Upper lobe of right lung (tissue), 1 donor: ENCODE measurements at regions of chr4 and their contacts with region 1.

Region 1: GRCh38 chr4:87006676-87007527 is 72.1 kb downstream of the AFF1 start:
- DNase-seq: peak; percentile 97
- ATAC-seq: peak; percentile 95
- H3K4me3 ChIP-seq: peak overlapping the region; percentile 83
- H3K27ac ChIP-seq: peak overlapping the region; percentile 98
- H3K4me1 ChIP-seq: peaks cover 44% of the 10 kb centered on the region
- H3K27me3 ChIP-seq: no peaks in the 10 kb centered on the region
- CTCF ChIP-seq: peak; percentile 17

Region 2: DNA sequence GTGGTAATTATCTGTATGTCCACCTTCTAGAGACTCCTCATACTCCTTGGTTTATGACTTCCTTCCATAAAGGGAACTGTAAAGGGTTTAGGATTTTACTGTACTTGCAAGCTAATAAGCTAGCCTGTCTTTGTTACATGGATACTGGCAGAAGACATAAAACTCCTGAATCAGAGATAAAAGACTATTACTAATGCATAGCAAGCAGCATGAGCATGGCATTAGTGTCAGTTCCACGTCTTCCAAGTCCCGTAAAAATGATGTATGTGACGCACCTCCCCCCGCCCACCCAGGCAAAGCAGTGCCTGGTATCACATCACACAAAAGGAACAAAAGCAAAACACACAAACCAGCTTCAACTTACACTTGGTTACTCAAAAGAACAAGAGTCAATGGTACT is 228.7 kb before region 1 on chr4:
- intact Hi-C with region 1: no loop called
- DNase-seq: no peak
- ATAC-seq: no peak
- H3K4me3 ChIP-seq: no peak overlapping the region
- H3K27ac ChIP-seq: no peak overlapping the region
- H3K4me1 ChIP-seq: no peaks in the 10 kb centered on the region
- H3K27me3 ChIP-seq: no peaks in the 10 kb centered on the region
- CTCF ChIP-seq: no peak

Region 3: GRCh38 chr4:86934771-86935565 is 71.9 kb before region 1 on chr4 and contains the start of gene AFF1:
- intact Hi-C with region 1: loop called (anchors 10 kb)
- DNase-seq: peak; percentile 98
- ATAC-seq: peak; percentile 97
- H3K4me3 ChIP-seq: peak within 1 kb of the TSS; percentile 91
- H3K27ac ChIP-seq: peak within 1 kb of the TSS; percentile 97
- H3K4me1 ChIP-seq: peaks cover 33% of the 10 kb centered on the region
- H3K27me3 ChIP-seq: no peaks in the 10 kb centered on the region
- CTCF ChIP-seq: peak; percentile 42
- total RNA-seq, gene AFF1: 103 TPM

Region 4: DNA sequence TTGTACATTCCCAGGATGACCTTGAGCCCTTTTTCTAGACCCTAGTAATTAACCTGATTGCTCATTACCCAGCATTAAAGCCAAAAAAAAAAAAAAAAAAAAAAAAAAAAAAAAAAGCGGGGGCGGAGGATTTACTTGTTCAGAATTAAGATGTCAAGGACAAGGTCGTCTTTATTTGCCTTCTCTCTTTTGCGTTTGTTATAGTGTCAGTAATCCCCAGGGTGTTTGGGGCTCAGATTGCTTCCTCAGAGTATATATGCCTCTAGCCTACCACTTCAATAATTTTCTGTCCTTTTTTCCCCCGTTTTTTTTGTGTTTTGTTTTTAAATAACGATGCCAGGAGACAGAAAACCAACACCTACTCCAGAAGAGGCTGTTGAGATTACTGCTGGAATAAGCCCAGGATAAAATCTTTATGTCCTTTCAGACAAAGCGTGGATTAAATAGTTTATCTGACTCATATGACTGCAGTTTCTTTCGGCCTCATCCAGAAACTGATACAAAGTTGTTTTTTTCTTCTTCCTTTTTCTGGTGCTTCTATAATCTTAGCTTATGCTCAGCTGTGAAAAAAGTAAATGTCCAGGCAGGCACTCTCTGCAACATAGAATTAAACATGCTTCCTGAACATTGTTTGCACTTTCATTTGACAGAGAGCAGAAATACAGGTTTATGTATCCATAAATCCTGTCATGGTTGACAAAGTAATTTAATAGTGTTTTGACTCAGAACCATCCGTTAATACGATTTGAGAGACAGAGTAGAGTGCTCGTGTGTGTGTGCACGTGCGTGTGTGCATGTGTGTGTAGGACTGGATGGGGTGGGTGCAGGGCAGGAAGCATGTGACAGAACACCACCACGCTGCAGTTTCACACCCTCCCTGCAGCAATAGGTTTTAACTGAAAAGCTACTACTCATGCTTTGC is 66.6 kb after region 1 on chr4:
- intact Hi-C with region 1: no loop called
- DNase-seq: peak; percentile 65
- ATAC-seq: peak; percentile 82
- H3K4me3 ChIP-seq: no peak overlapping the region
- H3K27ac ChIP-seq: peak overlapping the region; percentile 38
- H3K4me1 ChIP-seq: peaks cover 56% of the 10 kb centered on the region
- H3K27me3 ChIP-seq: no peaks in the 10 kb centered on the region
- CTCF ChIP-seq: no peak

Region 5: DNA sequence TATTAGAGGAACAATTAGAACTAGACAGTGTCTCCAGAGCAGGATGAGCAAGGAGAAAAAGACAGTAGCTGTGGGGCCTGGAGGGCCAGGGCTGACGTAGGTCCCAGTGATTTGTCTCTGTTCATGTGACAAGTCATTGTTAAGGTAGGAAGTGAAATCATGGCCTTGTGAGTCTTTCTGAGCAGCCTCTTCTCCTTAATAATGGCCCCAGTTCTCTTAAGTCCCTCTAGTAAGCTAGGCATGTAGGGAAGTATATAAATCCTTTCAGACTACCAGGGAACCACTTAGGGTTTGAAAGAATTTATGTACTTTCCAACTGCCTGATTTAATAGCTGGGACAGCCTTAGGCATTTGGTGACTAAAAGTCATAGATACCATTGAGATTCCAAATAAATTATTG is 80.5 kb after region 1 on chr4:
- intact Hi-C with region 1: loop called (anchors 10 kb)
- DNase-seq: no peak
- ATAC-seq: peak; percentile 58
- H3K4me3 ChIP-seq: no peak overlapping the region
- H3K27ac ChIP-seq: no peak overlapping the region
- H3K4me1 ChIP-seq: peaks cover 25% of the 10 kb centered on the region
- H3K27me3 ChIP-seq: no peaks in the 10 kb centered on the region
- CTCF ChIP-seq: no peak